SK-N-SH (cell line): ENCODE measurements at regions of chr1 and their contacts with region 1.

Region 1: DNA sequence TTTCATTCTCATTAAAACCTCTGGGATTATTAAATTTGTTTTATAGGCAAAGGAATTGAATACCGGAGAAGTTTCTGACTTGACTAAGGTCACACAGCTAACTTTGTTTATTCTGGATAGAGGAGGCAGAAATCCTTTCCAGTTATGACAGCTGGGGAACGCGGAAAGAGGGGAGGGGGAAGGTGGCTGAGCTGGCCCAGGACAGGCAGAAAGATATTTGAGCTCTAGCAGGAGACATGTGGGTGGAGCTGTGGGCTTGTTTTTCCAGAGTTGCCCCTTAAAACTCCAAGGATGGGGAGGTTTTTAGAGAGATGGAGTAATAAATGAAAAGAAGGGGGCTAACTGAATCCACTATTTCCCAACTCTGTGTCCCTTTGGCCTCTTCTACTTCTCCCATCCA is 27.8 kb downstream of the FOXD2 start:
- DNase-seq: no peak
- H3K4me3 ChIP-seq: no peak overlapping the region
- H3K27ac ChIP-seq: no peak overlapping the region
- H3K4me1 ChIP-seq: no peaks in the 10 kb centered on the region
- H3K27me3 ChIP-seq: peaks cover 3% of the 10 kb centered on the region
- CTCF ChIP-seq: no peak
- EP300 ChIP-seq: no peak
- RAD21 ChIP-seq: no peak

Region 2: DNA sequence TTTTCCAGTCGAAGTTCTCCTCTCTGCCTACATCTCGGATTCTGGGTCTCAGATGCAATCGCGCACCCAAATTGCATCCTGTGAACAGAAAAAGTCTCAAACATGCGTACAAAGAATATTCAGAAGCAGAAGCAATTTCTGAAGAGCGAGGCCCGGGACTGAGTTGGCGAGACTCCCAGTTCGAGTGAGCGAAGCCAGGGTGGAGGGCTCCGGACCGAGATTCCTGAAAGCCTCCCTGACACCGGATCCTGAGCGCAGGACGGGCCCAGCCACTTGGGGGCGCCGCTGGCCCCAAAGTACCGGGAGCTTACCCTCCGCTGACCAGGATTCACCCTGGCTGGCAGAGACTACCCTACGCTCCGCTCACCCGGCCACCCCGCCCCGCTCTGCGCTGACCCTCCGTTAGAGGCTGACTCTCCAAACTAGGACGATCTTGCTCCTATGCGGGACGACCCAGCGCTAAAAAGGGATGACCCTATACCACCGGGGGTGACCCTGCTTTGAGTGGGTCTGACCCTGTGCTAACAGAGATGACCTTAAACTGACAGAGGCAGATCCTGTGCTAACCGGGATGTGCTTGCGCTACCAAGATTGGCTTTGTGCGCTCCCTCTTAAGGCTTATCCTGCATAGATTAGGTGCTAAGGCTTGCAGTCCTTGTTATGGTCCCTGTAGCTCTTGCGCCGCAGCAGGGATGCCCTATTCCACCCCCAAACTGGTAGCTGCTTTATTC is 15.6 kb before region 1 on chr1:
- CTCF ChIA-PET with region 1: interaction called, 23 read pairs
- POLR2A ChIA-PET with region 1: no interaction called
- DNase-seq: peak; percentile 67
- H3K4me3 ChIP-seq: no peak overlapping the region; a peak in 1 of 4 replicates
- H3K27ac ChIP-seq: no peak overlapping the region
- H3K4me1 ChIP-seq: no peaks in the 10 kb centered on the region; a peak in 1 of 4 replicates
- H3K27me3 ChIP-seq: peaks cover 73% of the 10 kb centered on the region
- CTCF ChIP-seq: peak; percentile 53
- EP300 ChIP-seq: no peak
- RAD21 ChIP-seq: peak; percentile 53